Activated T-helper 2 cell treated with anti-CD3 and anti-CD28 coated beads, Interferon-gamma antibody, Interleukin-2, Interleukin-4, amounts not matched to agents 10 μg/mL and 5 μg/mL and 100 μg/mL, durations not matched to agents 14 hours and 24 hours and 36 hours (primary cell): ENCODE measurements at regions of chr17 and their contacts with region 1.

Region 1: DNA sequence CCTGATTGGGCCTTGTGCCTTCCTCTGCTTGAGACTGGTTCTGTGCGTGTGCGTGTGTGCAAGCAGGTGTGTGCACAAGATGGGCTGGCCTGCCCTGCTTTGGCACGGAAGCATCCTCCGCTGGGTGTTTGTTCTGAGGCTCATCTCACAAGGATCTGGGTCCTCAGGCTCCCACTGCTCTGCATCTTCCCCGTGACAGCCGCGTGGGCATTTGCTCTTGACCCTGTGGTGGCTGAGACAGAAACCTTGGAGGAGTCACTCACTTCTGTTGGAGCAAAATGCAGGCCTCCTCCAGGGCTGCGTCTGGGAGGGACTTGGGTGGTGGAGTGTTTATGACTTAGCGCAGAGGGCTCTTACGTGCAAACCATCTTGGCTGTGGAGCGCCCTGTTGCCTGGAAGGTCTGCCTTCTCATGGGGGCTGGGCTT is 119.2 kb downstream of the RPTOR start:
- DNase-seq: peak; percentile 43
- H3K4me3 Mint-ChIP-seq: peak overlapping the region; percentile 64
- H3K27ac Mint-ChIP-seq: peak overlapping the region; percentile 90
- H3K4me1 Mint-ChIP-seq: peaks cover 67% of the 10 kb centered on the region
- H3K27me3 Mint-ChIP-seq: no peaks in the 10 kb centered on the region

Region 2: GRCh38 chr17:80441133-80441578 is 222.6 kb before region 1 on chr17:
- intact Hi-C with region 1: no loop called
- DNase-seq: peak; percentile 45
- H3K4me3 Mint-ChIP-seq: no peak overlapping the region
- H3K27ac Mint-ChIP-seq: no peak overlapping the region
- H3K4me1 Mint-ChIP-seq: no peaks in the 10 kb centered on the region
- H3K27me3 Mint-ChIP-seq: no peaks in the 10 kb centered on the region

Region 3: DNA sequence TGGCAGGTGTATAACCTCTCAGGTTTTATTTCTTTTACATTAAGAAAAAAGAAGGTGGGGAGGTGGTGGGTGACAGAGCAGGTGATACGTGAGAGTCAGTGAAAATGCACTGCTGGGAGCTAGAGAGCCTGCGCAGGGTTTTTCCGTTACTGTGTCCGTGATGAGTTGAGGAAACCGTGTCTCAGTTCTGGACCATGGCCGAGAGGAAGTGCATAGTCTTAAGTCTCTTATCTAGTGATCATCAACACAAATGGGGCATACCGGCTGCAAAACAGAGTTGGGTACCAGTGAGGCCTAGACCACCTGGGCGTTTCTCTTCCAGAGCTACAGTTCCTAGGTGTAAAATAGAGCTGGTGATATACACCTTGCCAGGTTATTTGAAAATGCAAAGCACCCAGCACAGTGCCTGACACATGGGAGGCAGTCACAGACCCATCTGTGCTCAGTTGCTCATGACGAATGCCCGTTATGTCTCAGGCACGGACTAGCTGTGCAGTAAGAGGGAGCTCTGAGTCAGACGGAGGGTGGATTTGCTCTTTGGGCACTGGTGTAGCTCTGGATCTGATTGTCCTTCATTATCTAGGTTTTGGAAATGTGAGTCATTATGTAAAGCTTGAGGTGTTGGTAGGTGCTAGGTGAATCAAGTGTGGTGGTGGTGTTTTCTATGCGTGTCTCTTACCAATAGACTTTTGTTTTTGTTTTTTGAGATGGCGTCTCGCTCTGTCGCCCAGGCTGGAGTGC is 58.3 kb before region 1 on chr17:
- intact Hi-C with region 1: loop called (anchors 2 kb)
- DNase-seq: peak; percentile 39
- H3K4me3 Mint-ChIP-seq: no peak overlapping the region
- H3K27ac Mint-ChIP-seq: peak overlapping the region; percentile 74
- H3K4me1 Mint-ChIP-seq: peaks cover 57% of the 10 kb centered on the region
- H3K27me3 Mint-ChIP-seq: no peaks in the 10 kb centered on the region

Region 4: DNA sequence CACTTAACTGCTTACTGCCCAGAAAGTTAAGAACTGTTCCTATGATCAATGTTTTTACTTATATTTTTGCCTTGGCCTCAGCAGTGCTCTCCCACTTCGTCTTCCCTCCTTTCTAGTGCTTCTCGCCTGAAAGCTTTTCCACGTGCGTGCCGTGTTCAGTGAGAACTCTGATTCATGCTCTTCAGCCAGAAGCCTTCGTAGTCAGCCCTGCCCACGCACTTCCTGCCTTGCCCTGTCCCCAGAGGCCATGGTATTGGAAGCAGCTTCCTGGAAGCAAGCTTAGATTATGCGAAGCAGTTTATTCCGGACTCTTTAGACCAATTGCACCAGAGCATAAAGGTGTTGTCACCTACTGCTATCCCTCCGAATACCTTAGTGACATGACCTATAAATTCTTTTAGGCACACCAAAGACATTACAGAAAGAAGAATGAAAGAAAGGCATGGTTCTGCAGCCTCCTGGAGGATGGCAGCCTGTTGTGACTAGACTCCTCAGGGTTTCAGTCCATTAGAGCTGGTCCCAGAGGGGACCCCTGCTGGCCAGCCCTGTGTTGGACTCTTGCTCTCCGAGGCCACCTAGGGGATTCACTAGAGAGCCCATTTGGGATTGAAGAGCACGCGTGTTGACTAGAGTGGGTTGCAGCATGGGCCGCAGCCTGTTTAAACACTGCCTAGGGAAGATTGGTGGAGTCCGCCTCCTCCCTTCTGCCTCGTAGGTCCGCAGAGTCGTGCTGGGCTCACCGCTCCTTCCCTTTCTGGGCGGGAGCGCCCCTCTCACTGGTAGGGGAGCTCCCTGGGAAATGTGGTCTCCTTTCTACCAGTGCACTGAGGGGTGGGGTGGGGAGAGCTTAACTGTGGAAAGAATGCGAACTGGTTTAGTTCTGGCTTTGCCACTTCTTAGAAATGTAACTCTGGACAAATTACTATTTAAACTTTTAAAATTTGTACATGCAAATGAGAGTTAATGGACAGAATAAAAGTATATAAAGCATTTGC is 13.8 kb before region 1 on chr17:
- intact Hi-C with region 1: loop called (anchors 1 kb)
- DNase-seq: peak; percentile 53
- H3K4me3 Mint-ChIP-seq: peak overlapping the region; percentile 10
- H3K27ac Mint-ChIP-seq: peak overlapping the region; percentile 88
- H3K4me1 Mint-ChIP-seq: peaks cover 62% of the 10 kb centered on the region
- H3K27me3 Mint-ChIP-seq: no peaks in the 10 kb centered on the region

Region 5: GRCh38 chr17:80675438-80676095 is 11.8 kb after region 1 on chr17:
- intact Hi-C with region 1: loop called (anchors 2 kb)
- DNase-seq: no peak
- H3K4me3 Mint-ChIP-seq: no peak overlapping the region
- H3K27ac Mint-ChIP-seq: peak overlapping the region; percentile 4
- H3K4me1 Mint-ChIP-seq: peaks cover 64% of the 10 kb centered on the region
- H3K27me3 Mint-ChIP-seq: no peaks in the 10 kb centered on the region